Endothelial cell of umbilical vein (primary cell): ENCODE measurements at regions of chr17 and their contacts with region 1.

Region 1: GRCh38 chr17:75271233-75271954 is 363 bp upstream of the MIF4GD start:
- DNase-seq: peak; percentile 54
- H3K4me3 ChIP-seq: peak overlapping the region; percentile 57 to 89 (median 61)
- H3K27ac ChIP-seq: peak overlapping the region; percentile 50
- H3K4me1 ChIP-seq: peaks cover 32% of the 10 kb centered on the region
- H3K27me3 ChIP-seq: no peaks in the 10 kb centered on the region
- CTCF ChIP-seq: peak; percentile 60 to 82
- POLR2A ChIP-seq: no peak

Region 2: GRCh38 chr17:75250009-75250471 is 21.4 kb before region 1 on chr17:
- CTCF ChIA-PET with region 1: interaction called, 91 read pairs
- POLR2A ChIA-PET with region 1: no interaction called
- dilution Hi-C with region 1: no loop called
- intact Hi-C with region 1: no loop called
- DNase-seq: peak; percentile 85
- H3K4me3 ChIP-seq: peak overlapping the region in 2 of 3 experiments; percentile 12 to 33
- H3K27ac ChIP-seq: peak overlapping the region; percentile 31
- H3K4me1 ChIP-seq: peaks cover 11% of the 10 kb centered on the region
- H3K27me3 ChIP-seq: no peaks in the 10 kb centered on the region
- CTCF ChIP-seq: no peak
- POLR2A ChIP-seq: no peak

Region 3: DNA sequence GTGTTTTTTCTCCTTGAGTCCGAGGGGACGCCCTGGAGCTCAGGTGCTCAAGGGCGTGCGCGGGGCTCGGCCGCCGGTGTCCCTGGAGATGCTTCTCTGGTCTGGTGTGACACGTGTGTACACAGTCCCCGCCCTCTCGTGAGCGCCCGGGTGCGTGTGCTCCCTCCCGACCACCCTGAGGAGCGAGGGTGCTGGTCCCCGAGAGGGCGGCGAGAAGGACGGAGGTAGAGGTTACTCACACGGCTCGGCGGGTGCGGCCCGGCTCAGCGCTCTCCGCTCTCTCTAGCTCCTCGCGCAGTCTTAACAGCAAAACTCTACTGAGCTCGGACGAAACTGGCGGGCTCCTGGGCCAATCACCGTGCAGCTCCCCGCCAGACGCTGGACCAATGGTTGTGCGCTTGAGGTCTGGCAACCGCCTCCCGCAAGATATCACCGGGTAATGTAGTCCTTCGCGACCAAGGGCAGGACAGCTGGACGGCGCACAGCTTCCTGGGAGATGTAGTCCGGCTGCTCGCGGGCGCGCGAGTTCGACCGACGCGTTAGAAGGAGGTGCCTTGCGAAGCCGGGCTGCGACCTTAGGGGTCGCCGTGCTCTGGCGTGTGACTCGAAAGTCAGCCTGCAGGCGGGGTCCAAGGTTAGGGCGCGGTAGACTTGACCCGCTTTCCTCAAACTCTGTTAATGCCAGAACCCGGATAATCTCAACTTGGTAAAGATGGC is 17.9 kb after region 1 on chr17 and contains the start of gene SLC25A19:
- CTCF ChIA-PET with region 1: interaction called, 68 read pairs
- POLR2A ChIA-PET with region 1: interaction called, 17 read pairs
- dilution Hi-C with region 1: no loop called
- intact Hi-C with region 1: loop called (anchors 1 kb)
- DNase-seq: peak; percentile 100
- H3K4me3 ChIP-seq: peak within 1 kb of the TSS; percentile 66 to 85 (median 75)
- H3K27ac ChIP-seq: peak within 1 kb of the TSS; percentile 86
- H3K4me1 ChIP-seq: peaks cover 8% of the 10 kb centered on the region
- H3K27me3 ChIP-seq: no peaks in the 10 kb centered on the region
- CTCF ChIP-seq: no peak
- POLR2A ChIP-seq: peak; percentile 9
- total RNA-seq, gene SLC25A19: 16.8 and 20.9 TPM in 2 replicates

Region 4: GRCh38 chr17:75338335-75338734 is 66.9 kb after region 1 on chr17:
- CTCF ChIA-PET with region 1: no interaction called
- POLR2A ChIA-PET with region 1: no interaction called
- dilution Hi-C with region 1: no loop called
- intact Hi-C with region 1: no loop called
- DNase-seq: no peak
- H3K4me3 ChIP-seq: no peak overlapping the region
- H3K27ac ChIP-seq: no peak overlapping the region
- H3K4me1 ChIP-seq: no peaks in the 10 kb centered on the region
- H3K27me3 ChIP-seq: no peaks in the 10 kb centered on the region
- CTCF ChIP-seq: no peak
- POLR2A ChIP-seq: no peak

Region 5: DNA sequence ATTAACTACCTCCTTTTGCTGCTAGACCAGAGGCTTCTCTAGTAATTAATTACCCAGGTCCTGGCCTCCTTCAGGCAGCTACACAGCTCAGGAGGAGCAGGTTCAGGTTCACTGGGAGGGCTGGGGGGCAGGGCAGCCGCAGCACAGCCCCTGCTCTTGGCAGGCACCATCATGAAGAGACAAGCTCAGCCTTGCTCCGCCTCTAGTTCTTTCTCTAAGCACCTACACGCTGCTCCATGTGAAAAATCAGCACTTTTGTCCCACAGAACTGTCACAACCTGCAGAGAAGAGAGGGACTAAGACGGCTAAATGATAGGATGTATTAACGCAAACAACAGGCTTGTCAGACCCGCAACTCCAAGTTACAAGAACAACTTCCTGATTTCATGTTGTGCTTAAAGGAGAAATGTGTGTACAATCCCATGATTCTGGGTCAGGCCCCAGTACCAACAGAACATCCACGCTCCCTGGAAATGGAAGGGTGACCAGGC is 80.7 kb after region 1 on chr17:
- CTCF ChIA-PET with region 1: no interaction called
- POLR2A ChIA-PET with region 1: no interaction called
- dilution Hi-C with region 1: no loop called
- intact Hi-C with region 1: no loop called
- DNase-seq: no peak
- H3K4me3 ChIP-seq: no peak overlapping the region
- H3K27ac ChIP-seq: no peak overlapping the region
- H3K4me1 ChIP-seq: peaks cover 7% of the 10 kb centered on the region
- H3K27me3 ChIP-seq: no peaks in the 10 kb centered on the region
- CTCF ChIP-seq: no peak
- POLR2A ChIP-seq: no peak

Region 6: DNA sequence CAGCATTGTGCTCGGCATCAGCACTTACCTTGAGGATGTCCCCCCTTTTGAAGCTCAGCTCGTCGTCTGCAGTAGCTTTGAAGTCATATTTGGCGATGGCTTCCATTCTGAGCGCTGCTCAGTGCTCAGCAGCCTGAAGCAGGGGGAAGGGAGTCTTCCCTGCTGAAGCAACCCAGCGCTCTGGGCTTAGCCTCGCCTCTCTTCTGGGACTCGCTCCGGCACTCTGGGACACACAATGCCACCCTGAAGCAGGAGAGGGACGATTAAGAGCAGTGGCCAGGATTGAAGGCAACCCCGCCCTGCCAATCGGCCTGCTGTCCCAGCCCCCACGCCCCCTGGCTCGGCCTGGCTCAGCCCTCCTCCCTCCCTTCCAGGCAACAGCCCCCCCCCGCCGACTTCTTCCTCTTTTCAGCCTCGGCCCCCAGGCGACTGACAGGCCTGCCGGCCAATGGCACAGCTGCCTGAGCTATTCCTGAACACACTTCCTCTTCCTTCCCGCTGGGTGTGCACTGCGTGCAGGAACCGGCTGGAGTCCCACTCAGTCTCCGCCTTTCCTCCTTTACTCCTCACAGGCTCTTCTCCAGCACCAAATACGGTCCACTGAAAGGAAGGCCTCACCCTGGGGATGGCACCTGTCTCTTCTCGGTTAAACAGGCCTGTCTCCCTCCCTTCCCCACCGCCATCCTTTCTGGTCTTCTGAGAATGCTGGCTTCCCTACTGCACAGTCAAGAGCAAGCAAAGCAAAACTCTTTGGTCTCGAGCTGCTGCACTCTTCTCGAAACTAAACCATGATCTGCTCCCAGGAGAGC is 122.3 kb after region 1 on chr17:
- CTCF ChIA-PET with region 1: interaction called, 15 read pairs
- POLR2A ChIA-PET with region 1: interaction called, 5 read pairs
- dilution Hi-C with region 1: no loop called
- intact Hi-C with region 1: no loop called
- DNase-seq: peak; percentile 98
- H3K4me3 ChIP-seq: peak overlapping the region; percentile 73 to 77 (median 76)
- H3K27ac ChIP-seq: peak overlapping the region; percentile 59
- H3K4me1 ChIP-seq: peaks cover 26% of the 10 kb centered on the region
- H3K27me3 ChIP-seq: no peaks in the 10 kb centered on the region
- CTCF ChIP-seq: no peak
- POLR2A ChIP-seq: peak; percentile 93

Region 7: GRCh38 chr17:75405365-75406221 is 134.2 kb after region 1 on chr17 and contains the start of gene GRB2:
- CTCF ChIA-PET with region 1: interaction called, 15 read pairs
- POLR2A ChIA-PET with region 1: interaction called, 3 read pairs
- dilution Hi-C with region 1: no loop called
- intact Hi-C with region 1: loop called (anchors 2 kb)
- DNase-seq: peak; percentile 97
- H3K4me3 ChIP-seq: peak within 1 kb of the TSS; percentile 78 to 97 (median 96)
- H3K27ac ChIP-seq: peak within 1 kb of the TSS; percentile 54
- H3K4me1 ChIP-seq: peaks cover 12% of the 10 kb centered on the region
- H3K27me3 ChIP-seq: peaks cover 2% of the 10 kb centered on the region in 2 experiments
- CTCF ChIP-seq: no peak
- POLR2A ChIP-seq: peak; percentile 90
- total RNA-seq, gene GRB2: 93.9 and 94.8 TPM in 2 replicates

Region 8: DNA sequence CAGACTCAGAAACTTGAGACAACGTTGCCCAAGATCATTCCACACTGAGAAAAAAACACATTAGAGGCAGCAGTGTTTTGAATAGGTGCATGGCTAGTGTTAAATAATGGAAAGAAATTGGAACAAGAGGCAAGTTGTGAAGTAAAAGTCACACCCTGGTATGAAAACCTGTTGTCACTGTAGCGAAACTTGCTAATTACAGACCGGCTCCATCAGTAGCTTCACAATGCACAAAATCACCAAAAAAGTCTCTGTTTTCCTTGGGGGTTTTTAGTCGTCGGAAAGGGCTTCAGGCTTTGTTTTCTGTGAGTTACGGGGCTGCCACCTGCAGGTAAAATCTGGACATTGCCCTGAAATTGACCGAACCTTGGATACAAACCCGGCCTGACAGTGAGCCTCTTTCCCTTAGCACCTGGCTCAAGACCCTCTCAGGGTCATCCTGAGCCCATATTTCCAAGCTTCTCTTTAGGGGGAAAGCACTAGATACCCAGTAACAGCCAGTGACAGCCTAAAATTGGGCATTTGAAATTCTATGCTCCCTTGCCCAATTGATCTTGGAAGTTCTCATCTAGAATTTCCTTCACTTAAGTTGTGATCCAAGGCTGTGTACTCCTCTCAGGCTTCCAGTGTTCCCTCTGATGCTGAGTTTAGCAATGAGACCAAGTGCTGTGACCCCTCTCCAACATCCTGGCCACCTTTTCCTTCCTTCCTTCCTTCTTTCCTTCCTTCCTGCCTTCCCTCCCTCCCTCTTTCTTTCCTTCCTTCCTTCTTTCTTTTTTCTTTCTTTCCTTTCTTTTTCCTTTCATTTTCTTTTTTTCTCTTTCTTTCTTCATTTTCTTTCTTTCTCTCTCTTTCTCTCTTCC is 141.3 kb after region 1 on chr17:
- CTCF ChIA-PET with region 1: interaction called, 36 read pairs
- POLR2A ChIA-PET with region 1: no interaction called
- dilution Hi-C with region 1: no loop called
- intact Hi-C with region 1: loop called (anchors 1 kb)
- DNase-seq: peak; percentile 74
- H3K4me3 ChIP-seq: peak overlapping the region in 1 of 3 experiments; percentile 27
- H3K27ac ChIP-seq: no peak overlapping the region
- H3K4me1 ChIP-seq: peaks cover 5% of the 10 kb centered on the region
- H3K27me3 ChIP-seq: peaks cover 2 to 3% of the 10 kb centered on the region in 2 experiments
- CTCF ChIP-seq: peak; percentile 72 to 77
- POLR2A ChIP-seq: no peak